A673 (cell line): ENCODE measurements at regions of chr5 and their contacts with region 1.

Region 1: DNA sequence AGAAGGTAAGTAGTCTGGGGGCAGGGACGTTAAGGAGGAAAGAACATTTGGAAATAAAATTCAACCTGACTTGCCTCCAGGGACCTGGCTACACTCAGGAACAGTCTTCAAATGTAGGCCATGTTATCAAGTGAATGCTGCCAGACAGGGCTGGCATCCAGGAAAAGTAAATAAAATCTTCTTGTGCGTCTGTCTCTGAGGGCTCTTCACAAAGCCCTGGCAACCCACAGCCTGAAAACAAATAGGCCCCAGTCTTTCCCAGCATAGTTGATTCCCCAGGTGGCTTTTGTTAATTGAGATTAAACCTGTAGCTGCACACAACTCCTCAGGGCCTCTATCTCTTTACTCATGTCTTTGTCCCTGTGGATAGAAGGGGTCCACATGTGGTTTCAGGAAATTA is 55.4 kb downstream of the STK32A start:
- DNase-seq: no peak
- H3K4me3 ChIP-seq: no peak overlapping the region
- H3K27ac ChIP-seq: no peak overlapping the region
- H3K4me1 ChIP-seq: no peaks in the 10 kb centered on the region
- H3K27me3 ChIP-seq: peaks cover 18% of the 10 kb centered on the region
- CTCF ChIP-seq: no peak

Region 2: GRCh38 chr5:147346006-147346561 is 55.8 kb after region 1 on chr5:
- CTCF ChIA-PET with region 1: no interaction called
- POLR2A ChIA-PET with region 1: no interaction called
- intact Hi-C with region 1: loop called (anchors 2 kb)
- DNase-seq: peak; percentile 14
- H3K4me3 ChIP-seq: no peak overlapping the region
- H3K27ac ChIP-seq: no peak overlapping the region
- H3K4me1 ChIP-seq: no peaks in the 10 kb centered on the region
- H3K27me3 ChIP-seq: peaks cover 27% of the 10 kb centered on the region
- CTCF ChIP-seq: peak; percentile 46

Region 3: GRCh38 chr5:147831465-147831864 is 541.2 kb after region 1 on chr5 and contains the start of gene SPINK1:
- CTCF ChIA-PET with region 1: no interaction called
- POLR2A ChIA-PET with region 1: no interaction called
- intact Hi-C with region 1: no loop called
- DNase-seq: no peak
- H3K4me3 ChIP-seq: no peak within 1 kb of the TSS
- H3K27ac ChIP-seq: no peak within 1 kb of the TSS
- H3K4me1 ChIP-seq: peaks cover 7% of the 10 kb centered on the region
- H3K27me3 ChIP-seq: no peaks in the 10 kb centered on the region
- CTCF ChIP-seq: no peak
- total RNA-seq, gene SPINK1: not detected in 2 replicates